Common myeloid progenitor, CD34-positive (primary cell): ENCODE measurements at regions of chrX and their contacts with region 1.

Region 1: GRCh38 chrX:129642641-129643040 is 12.1 kb downstream of the APLN start:
- DNase-seq: peak in 2 of 3 donors; percentile 48 to 58
- H3K4me3 ChIP-seq: no peak overlapping the region
- H3K27ac ChIP-seq: no peak overlapping the region
- H3K4me1 ChIP-seq: peaks cover 0 to 8% (median 2%) of the 10 kb centered on the region in 4 experiments
- H3K27me3 ChIP-seq: peaks cover 0 to 8% (median 0%) of the 10 kb centered on the region in 5 experiments

Region 2: GRCh38 chrX:129665910-129666644 is 23.4 kb after region 1 on chrX:
- CTCF ChIA-PET with region 1: no interaction called
- POLR2A ChIA-PET with region 1: no interaction called
- DNase-seq: no peak
- H3K4me3 ChIP-seq: no peak overlapping the region
- H3K27ac ChIP-seq: no peak overlapping the region
- H3K4me1 ChIP-seq: no peaks in the 10 kb centered on the region
- H3K27me3 ChIP-seq: no peaks in the 10 kb centered on the region

Region 3: DNA sequence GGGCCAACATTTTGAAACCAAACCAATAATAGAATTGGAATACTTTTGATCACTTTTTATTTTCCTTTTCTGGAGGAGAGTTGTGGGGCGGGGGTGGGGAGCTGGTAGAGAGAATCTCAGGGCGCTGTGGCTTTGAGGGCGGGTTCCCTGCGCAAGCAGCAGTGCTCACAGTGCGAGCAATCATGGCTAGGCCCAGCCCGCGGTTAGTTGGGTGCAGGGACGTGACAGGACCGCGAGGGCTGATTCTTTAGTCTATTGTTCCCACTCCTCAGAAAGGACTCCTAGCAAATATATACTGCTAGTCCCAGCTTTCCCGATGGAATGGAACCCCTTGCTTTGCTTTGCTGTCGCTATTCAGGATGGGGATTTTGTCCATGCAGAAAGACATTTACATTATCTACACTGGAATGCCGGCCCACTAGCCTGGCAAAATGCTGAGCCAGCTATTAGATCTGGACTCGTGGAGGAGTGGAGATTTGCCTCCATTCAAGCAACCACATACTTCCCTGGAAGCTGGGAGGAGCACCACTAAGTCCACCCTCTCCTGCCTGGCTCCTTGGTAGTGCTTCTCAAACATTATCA is 36.1 kb after region 1 on chrX:
- CTCF ChIA-PET with region 1: interaction called, 11 read pairs
- POLR2A ChIA-PET with region 1: no interaction called
- DNase-seq: peak in 2 of 3 donors; percentile 30 to 38
- H3K4me3 ChIP-seq: peak overlapping the region in 6 of 7 experiments; percentile 16 to 70 (median 49)
- H3K27ac ChIP-seq: no peak overlapping the region
- H3K4me1 ChIP-seq: peaks cover 0 to 13% (median 8%) of the 10 kb centered on the region in 4 experiments
- H3K27me3 ChIP-seq: no peaks in the 10 kb centered on the region